Right ventricle myocardium inferior (tissue), 1 donor: ENCODE measurements at regions of chr5 and their contacts with region 1.

Region 1: GRCh38 chr5:102681407-102681983 is 73.6 kb upstream of the PAM start:
- DNase-seq: no peak
- ATAC-seq: peak; percentile 82

Region 2: DNA sequence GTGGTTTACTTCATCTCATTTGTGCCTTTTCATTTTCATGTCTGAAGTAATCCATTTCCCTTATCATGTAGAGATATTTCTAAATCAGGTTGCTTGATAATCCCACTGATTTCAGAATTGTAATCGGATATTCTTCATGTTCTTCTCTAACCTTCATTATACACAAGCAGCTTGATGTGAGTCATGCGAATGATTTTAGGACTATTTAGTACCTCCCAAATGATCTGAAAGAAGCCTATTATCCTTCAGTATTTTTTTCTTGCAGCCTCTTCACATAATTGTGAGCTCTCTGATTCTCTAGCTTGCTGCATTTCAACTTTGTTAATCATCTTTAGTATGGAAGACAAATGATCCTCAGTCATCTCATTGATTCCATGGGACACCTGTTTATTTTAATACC is 256.4 kb after region 1 on chr5:
- intact Hi-C with region 1: no loop called
- DNase-seq: no peak
- ATAC-seq: no peak

Region 3: DNA sequence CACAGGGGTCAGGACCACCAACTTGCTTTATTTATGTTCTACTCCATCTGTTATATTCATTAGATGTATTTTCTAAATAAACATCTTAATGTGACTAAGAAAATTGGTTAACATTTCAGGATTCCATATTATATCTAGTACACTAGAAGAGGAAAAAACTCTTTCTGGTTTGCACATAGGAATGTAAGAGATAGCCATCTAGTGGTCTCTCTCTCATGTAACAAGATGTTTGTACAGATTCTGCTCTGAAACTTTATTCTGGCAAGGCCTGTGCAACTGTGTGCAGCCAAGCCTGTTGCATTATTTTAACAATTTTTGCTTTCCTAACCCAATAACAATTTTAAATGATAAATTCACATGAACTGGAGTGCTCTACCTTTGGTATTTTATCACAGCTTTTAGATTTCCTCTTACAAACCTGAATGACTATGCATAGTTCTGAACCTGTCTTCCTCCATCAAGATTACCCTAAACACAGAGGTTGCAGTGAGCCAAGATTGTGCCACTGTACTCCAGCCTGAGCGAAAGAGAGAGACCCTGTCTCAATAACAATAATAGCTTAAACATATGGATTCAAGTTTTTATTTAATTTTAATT is 290.3 kb after region 1 on chr5:
- intact Hi-C with region 1: loop called (anchors 2 kb)
- DNase-seq: no peak
- ATAC-seq: peak; percentile 16

Region 4: GRCh38 chr5:103041071-103041676 is 359.7 kb after region 1 on chr5:
- intact Hi-C with region 1: loop called (anchors 1 kb)
- DNase-seq: no peak
- ATAC-seq: no peak

Region 5: DNA sequence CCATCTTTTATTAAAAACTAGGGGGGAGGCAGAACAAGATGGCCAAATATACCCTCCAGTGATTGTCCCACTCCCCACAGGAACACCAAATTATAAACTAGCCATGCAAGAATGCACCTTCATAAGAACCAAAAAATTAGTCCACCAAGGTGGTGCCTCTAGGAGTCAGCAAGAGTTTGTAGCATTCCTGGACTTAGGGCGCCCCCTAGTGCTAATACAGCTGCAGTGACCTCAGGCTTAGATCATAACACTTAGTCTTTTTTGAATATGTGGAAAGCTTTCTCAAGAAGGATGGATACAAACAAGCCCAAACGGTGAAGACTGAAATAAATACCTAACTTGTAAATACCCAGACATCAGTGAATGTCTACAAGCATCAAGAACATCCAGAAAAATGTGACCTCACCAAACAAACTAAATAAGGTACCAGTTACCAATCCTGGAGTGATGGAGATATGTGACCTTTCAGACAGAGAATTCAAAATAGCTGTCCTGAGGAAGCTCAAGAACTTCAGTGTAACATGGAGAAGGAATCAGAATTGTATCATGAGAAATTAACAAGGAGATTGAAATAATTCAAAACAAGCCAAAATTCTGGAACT is 457.9 kb after region 1 on chr5:
- intact Hi-C with region 1: loop called (anchors 2 kb)
- DNase-seq: peak; percentile 79
- ATAC-seq: peak; percentile 85